Activated CD4-positive, alpha-beta T cell treated with anti-CD3 and anti-CD28 coated beads, Interleukin-2, amount 10 ng/mL, durations not matched to agents 7 days and 5 days (primary cell): ENCODE measurements at regions of chr14 and their contacts with region 1.

Region 1: GRCh38 chr14:75982266-75983018 is 647 bp upstream of the TGFB3 start:
- DNase-seq: peak; percentile 80
- H3K4me3 Mint-ChIP-seq: peak overlapping the region; percentile 72
- H3K27ac Mint-ChIP-seq: peak overlapping the region; percentile 50
- H3K4me1 Mint-ChIP-seq: peaks cover 61% of the 10 kb centered on the region
- H3K27me3 Mint-ChIP-seq: peaks cover 6% of the 10 kb centered on the region

Region 2: GRCh38 chr14:75709207-75709812 is 273.1 kb before region 1 on chr14:
- CTCF ChIA-PET with region 1: interaction called, 38 read pairs
- POLR2A ChIA-PET with region 1: interaction called, 3 read pairs
- DNase-seq: peak; percentile 79
- H3K4me3 Mint-ChIP-seq: no peak overlapping the region
- H3K27ac Mint-ChIP-seq: no peak overlapping the region
- H3K4me1 Mint-ChIP-seq: no peaks in the 10 kb centered on the region
- H3K27me3 Mint-ChIP-seq: no peaks in the 10 kb centered on the region

Region 3: DNA sequence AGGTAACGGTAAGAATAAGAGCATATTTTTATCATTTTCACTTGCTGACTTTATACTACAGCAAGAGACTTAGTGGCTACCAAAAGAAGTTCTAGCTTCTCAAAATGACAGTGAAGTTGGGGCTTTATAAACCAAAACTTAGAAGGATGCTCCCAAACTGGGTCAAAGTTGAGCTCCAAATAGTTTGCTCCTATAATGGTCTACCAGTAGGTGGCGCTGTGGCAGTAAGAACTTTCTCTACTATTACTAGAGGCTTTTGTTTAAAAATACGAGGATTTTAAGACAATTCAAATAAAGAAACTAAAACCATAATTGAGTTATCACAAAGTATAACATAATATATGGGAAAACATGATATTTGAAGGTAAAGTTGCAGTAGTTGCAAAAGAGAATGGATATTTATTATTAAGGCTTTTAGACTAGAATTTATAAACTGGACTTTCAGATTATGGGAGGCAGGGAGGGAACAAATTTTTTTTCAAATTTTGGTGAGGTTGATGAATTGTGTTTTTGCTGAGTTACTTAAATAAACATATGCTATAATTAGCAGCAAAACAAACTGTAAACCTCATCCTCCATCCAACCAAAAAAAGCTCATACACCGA is 75.7 kb before region 1 on chr14:
- CTCF ChIA-PET with region 1: interaction called, 15 read pairs
- POLR2A ChIA-PET with region 1: interaction called, 3 read pairs
- DNase-seq: peak; percentile 82
- H3K4me3 Mint-ChIP-seq: no peak overlapping the region
- H3K27ac Mint-ChIP-seq: no peak overlapping the region
- H3K4me1 Mint-ChIP-seq: no peaks in the 10 kb centered on the region
- H3K27me3 Mint-ChIP-seq: no peaks in the 10 kb centered on the region